CD8-positive, alpha-beta T cell (primary cell): ENCODE measurements at regions of chr15 and their contacts with region 1.

Region 1: GRCh38 chr15:65494071-65494470 is 23.4 kb downstream of the DPP8 start:
- DNase-seq: no peak
- ATAC-seq: no peak
- H3K4me3 ChIP-seq: no peak overlapping the region
- H3K4me3 Mint-ChIP-seq: no peak overlapping the region
- H3K27ac ChIP-seq: no peak overlapping the region
- H3K27ac Mint-ChIP-seq: no peak overlapping the region
- H3K4me1 ChIP-seq: no peaks in the 10 kb centered on the region
- H3K4me1 Mint-ChIP-seq: peaks cover 13% of the 10 kb centered on the region
- H3K27me3 ChIP-seq: no peaks in the 10 kb centered on the region
- H3K27me3 Mint-ChIP-seq: no peaks in the 10 kb centered on the region
- CTCF ChIP-seq: no peak

Region 2: GRCh38 chr15:65395567-65396185 is 98.4 kb before region 1 on chr15:
- CTCF ChIA-PET with region 1: no interaction called
- POLR2A ChIA-PET with region 1: no interaction called
- intact Hi-C with region 1: no loop called
- DNase-seq: no peak
- ATAC-seq: no peak
- H3K4me3 ChIP-seq: no peak overlapping the region
- H3K4me3 Mint-ChIP-seq: no peak overlapping the region
- H3K27ac ChIP-seq: no peak overlapping the region
- H3K27ac Mint-ChIP-seq: no peak overlapping the region
- H3K4me1 ChIP-seq: peaks cover 5% of the 10 kb centered on the region
- H3K4me1 Mint-ChIP-seq: peaks cover 8% of the 10 kb centered on the region
- H3K27me3 ChIP-seq: peaks cover 10 to 29% of the 10 kb centered on the region in 2 experiments
- H3K27me3 Mint-ChIP-seq: peaks cover 66% of the 10 kb centered on the region
- CTCF ChIP-seq: no peak

Region 3: GRCh38 chr15:65451989-65452388 is 42.1 kb before region 1 on chr15:
- CTCF ChIA-PET with region 1: no interaction called
- POLR2A ChIA-PET with region 1: no interaction called
- intact Hi-C with region 1: loop called in 1 of 2 experiments (anchors 1 kb)
- DNase-seq: no peak
- ATAC-seq: no peak
- H3K4me3 ChIP-seq: no peak overlapping the region
- H3K4me3 Mint-ChIP-seq: no peak overlapping the region
- H3K27ac ChIP-seq: no peak overlapping the region
- H3K27ac Mint-ChIP-seq: no peak overlapping the region
- H3K4me1 ChIP-seq: no peaks in the 10 kb centered on the region
- H3K4me1 Mint-ChIP-seq: no peaks in the 10 kb centered on the region
- H3K27me3 ChIP-seq: no peaks in the 10 kb centered on the region
- H3K27me3 Mint-ChIP-seq: no peaks in the 10 kb centered on the region
- CTCF ChIP-seq: no peak

Region 4: DNA sequence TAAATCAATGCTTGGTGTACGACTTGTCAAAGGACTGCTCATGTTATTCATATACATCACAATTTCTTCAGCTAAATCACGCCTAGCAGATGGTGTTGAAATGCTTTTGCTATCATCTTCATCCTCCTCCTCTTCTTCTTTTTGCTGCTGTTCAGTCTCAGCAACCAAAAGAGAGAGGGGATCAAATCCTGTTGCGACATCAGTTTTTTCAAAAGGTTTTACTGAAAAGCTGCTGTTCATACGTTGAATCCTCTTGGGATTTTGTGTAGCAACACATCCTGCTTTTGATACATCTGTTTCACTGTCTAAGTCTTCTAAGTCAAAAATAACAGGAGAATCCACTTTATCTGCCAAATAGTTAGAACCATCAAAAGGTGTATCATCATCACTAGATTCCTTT is 196.7 kb after region 1 on chr15:
- CTCF ChIA-PET with region 1: no interaction called
- POLR2A ChIA-PET with region 1: no interaction called
- intact Hi-C with region 1: no loop called
- DNase-seq: no peak
- ATAC-seq: no peak
- H3K4me3 ChIP-seq: no peak overlapping the region
- H3K4me3 Mint-ChIP-seq: no peak overlapping the region
- H3K27ac ChIP-seq: no peak overlapping the region
- H3K27ac Mint-ChIP-seq: no peak overlapping the region
- H3K4me1 ChIP-seq: no peaks in the 10 kb centered on the region
- H3K4me1 Mint-ChIP-seq: no peaks in the 10 kb centered on the region
- H3K27me3 ChIP-seq: no peaks in the 10 kb centered on the region
- H3K27me3 Mint-ChIP-seq: no peaks in the 10 kb centered on the region
- CTCF ChIP-seq: no peak